Right ventricle myocardium superior (tissue), 1 donor: ENCODE measurements at regions of chr6 and their contacts with region 1.

Region 1: GRCh38 chr6:75934643-75935472 is 137.6 kb downstream of the IMPG1 start:
- DNase-seq: peak; percentile 45
- ATAC-seq: peak; percentile 81

Region 2: DNA sequence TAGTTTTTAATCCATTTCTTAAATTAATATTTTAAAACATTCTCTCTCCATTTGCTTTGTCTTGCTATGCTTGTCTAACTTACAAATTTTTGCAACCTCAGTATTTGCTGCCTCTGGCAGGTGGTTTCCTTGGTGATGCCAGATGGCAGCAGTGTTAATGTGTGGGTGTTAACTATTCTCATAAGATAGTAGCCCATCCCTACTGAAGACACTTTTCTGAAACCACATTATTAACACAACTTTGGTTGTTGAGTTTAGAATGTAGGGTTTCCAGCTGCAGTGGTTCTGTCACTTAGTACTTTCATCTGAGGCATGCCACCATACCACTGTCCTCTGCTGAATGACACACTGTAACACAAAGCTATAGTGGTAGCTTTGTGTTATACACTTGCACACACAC is 110.7 kb before region 1 on chr6:
- intact Hi-C with region 1: no loop called
- DNase-seq: no peak
- ATAC-seq: no peak

Region 3: GRCh38 chr6:75970093-75970492 is 35.2 kb after region 1 on chr6:
- intact Hi-C with region 1: no loop called
- DNase-seq: no peak
- ATAC-seq: no peak

Region 4: DNA sequence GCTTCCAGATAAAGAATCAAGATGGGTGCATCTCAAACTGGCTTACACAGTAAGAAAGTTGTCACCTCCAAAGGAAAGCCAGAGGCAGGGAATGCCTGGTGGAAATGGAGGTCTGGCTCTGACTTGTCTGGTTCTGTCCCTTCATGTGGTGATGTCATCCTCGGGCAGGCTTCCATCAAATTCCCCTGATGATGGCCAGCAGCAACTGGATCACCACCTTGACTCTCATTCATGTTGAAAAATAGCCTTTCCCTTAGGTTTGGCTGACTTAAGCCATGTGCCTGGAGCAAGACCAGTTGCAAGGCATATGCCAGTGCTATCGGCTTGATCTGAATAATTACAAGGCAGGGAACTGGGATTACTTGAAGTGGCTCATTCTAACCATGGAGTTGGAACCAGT is 108.8 kb after region 1 on chr6:
- intact Hi-C with region 1: no loop called
- DNase-seq: no peak
- ATAC-seq: no peak

Region 5: DNA sequence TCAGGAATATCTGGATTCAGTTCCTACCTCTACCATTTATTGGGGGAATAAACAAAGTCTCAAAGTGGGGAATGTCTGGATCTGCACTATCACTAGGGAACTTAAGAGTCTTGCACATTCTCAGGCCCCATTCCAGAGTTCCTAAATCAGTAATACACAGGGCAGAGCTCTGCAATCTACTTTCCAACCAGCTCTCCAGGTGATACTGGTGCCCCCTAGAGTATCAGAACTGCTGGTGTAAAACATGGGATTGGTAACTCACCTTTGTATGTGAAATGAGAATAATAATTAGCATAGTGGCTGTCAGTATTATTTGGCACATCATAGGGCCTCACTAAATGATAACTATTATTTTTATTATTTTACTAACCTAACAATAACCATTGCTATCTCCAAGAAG is 416.4 kb after region 1 on chr6:
- intact Hi-C with region 1: loop called (anchors 5 kb)
- DNase-seq: no peak
- ATAC-seq: peak; percentile 51